Activated CD4-positive, alpha-beta T cell treated with anti-CD3 and anti-CD28 coated beads for 36 hours (primary cell): ENCODE measurements at regions of chr6 and their contacts with region 1.

Region 1: GRCh38 chr6:53335208-53335994 is 13.3 kb downstream of the ELOVL5 start:
- DNase-seq: peak; percentile 77
- ATAC-seq: peak; percentile 82
- H3K4me3 Mint-ChIP-seq: peak overlapping the region; percentile 76
- H3K27ac Mint-ChIP-seq: peak overlapping the region; percentile 99
- H3K4me1 Mint-ChIP-seq: peaks cover 86% of the 10 kb centered on the region
- H3K27me3 Mint-ChIP-seq: no peaks in the 10 kb centered on the region

Region 2: GRCh38 chr6:52361945-52362442 is 973.4 kb before region 1 on chr6 and contains the start of gene PAQR8:
- CTCF ChIA-PET with region 1: no interaction called
- POLR2A ChIA-PET with region 1: no interaction called
- intact Hi-C with region 1: no loop called
- DNase-seq: peak; percentile 88
- ATAC-seq: peak; percentile 89
- H3K4me3 Mint-ChIP-seq: peak within 1 kb of the TSS; percentile 99
- H3K27ac Mint-ChIP-seq: peak within 1 kb of the TSS; percentile 94
- H3K4me1 Mint-ChIP-seq: peaks cover 42% of the 10 kb centered on the region
- H3K27me3 Mint-ChIP-seq: no peaks in the 10 kb centered on the region
- total RNA-seq, gene PAQR8: 9.0 to 9.1 TPM

Region 3: GRCh38 chr6:53090576-53090975 is 244.8 kb before region 1 on chr6:
- CTCF ChIA-PET with region 1: no interaction called
- POLR2A ChIA-PET with region 1: no interaction called
- intact Hi-C with region 1: no loop called
- DNase-seq: no peak
- ATAC-seq: no peak
- H3K4me3 Mint-ChIP-seq: no peak overlapping the region
- H3K27ac Mint-ChIP-seq: no peak overlapping the region
- H3K4me1 Mint-ChIP-seq: no peaks in the 10 kb centered on the region
- H3K27me3 Mint-ChIP-seq: no peaks in the 10 kb centered on the region

Region 4: GRCh38 chr6:53300656-53301551 is 34.5 kb before region 1 on chr6:
- CTCF ChIA-PET with region 1: interaction called, 3 read pairs
- POLR2A ChIA-PET with region 1: no interaction called
- intact Hi-C with region 1: loop called (anchors 1 to 5 kb)
- DNase-seq: peak; percentile 41
- ATAC-seq: peak; percentile 22
- H3K4me3 Mint-ChIP-seq: no peak overlapping the region
- H3K27ac Mint-ChIP-seq: peak overlapping the region; percentile 58
- H3K4me1 Mint-ChIP-seq: peaks cover 76% of the 10 kb centered on the region
- H3K27me3 Mint-ChIP-seq: no peaks in the 10 kb centered on the region

Region 5: DNA sequence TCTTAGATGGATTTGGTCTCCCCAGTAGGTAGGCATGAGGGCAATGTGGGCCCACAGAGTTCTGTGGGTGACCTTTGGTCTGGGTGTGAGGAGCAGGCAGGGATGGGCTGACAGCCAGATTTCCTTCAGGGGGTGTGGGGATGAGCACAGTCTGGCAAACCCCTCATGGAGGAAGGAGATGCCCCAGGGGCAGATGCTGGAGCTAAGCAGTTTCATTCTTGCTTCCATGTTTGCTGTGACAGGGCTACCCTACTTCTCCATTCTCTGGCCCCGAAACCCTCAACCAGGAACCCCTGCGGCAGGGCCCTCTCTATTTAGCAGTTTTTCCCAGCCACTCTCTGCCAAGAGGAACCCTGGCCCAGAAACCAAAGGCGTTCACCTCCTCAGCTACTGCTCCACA is 169.1 kb after region 1 on chr6:
- CTCF ChIA-PET with region 1: no interaction called
- POLR2A ChIA-PET with region 1: no interaction called
- intact Hi-C with region 1: no loop called
- DNase-seq: no peak
- ATAC-seq: no peak
- H3K4me3 Mint-ChIP-seq: no peak overlapping the region
- H3K27ac Mint-ChIP-seq: no peak overlapping the region
- H3K4me1 Mint-ChIP-seq: no peaks in the 10 kb centered on the region
- H3K27me3 Mint-ChIP-seq: no peaks in the 10 kb centered on the region